H1 (cell line): ENCODE measurements at regions of chr3 and their contacts with region 1.

Region 1: DNA sequence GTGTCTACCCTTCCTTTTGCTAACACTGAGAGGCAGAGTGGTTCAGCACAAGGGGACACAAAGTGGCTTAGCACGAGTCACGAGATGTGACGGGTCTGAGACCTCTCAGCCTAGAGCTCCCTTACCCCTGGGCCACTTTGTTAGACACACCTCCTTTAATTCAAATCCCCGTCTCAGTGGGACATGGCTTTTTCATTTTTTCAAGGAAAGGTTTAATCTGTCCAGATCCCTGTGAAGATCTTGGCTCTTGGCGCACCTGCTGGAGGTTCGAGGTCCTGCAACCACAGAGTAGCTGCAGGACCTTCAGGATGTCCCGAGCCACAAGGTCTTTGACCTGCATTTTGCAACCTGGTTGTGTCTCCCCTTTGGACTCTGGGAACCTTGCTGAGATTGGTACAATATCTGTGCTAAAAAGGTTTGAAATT is 52.0 kb downstream of the LPP start:
- DNase-seq: no peak
- H3K4me3 ChIP-seq: no peak overlapping the region
- H3K27ac ChIP-seq: no peak overlapping the region
- H3K4me1 ChIP-seq: peaks cover 0 to 15% (median 4%) of the 10 kb centered on the region in 4 experiments; a peak in 5 of 7 replicates
- H3K27me3 ChIP-seq: no peaks in the 10 kb centered on the region
- CTCF ChIP-seq: peak; percentile 32 to 58 (median 57); a peak in 3 of 4 replicates
- EP300 ChIP-seq: no peak
- POLR2A ChIP-seq: no peak
- RAD21 ChIP-seq: peak; percentile 49 to 50

Region 2: DNA sequence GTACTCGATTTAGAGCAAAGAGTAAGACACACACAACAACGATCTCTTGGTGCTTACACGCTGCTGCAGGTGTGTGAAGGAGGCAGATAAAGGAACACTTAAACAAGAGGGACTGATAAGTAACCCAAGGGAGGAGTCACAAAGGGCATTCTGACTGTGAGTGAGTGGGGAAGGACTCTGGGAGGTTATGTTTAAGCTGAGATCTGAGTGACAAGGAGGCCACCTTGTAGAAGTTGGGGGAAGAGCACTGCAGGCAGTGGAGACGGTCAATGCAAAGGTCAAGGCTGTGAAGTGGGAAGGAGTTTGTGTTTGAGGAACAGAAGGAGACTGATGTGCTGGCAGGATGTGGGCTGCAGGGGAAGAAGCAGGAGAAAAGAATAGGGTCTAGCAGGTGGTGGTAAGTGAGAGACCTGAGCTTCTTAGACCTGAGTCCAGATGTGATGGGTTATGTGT is 11.0 kb after region 1 on chr3:
- CTCF ChIA-PET with region 1: interaction called, 18 read pairs
- POLR2A ChIA-PET with region 1: interaction called, 3 read pairs
- DNase-seq: no peak
- H3K4me3 ChIP-seq: no peak overlapping the region
- H3K27ac ChIP-seq: no peak overlapping the region
- H3K4me1 ChIP-seq: peaks cover 0 to 11% (median 5%) of the 10 kb centered on the region in 4 experiments; a peak in 4 of 7 replicates
- H3K27me3 ChIP-seq: no peaks in the 10 kb centered on the region
- CTCF ChIP-seq: no peak
- EP300 ChIP-seq: no peak
- POLR2A ChIP-seq: no peak
- RAD21 ChIP-seq: no peak

Region 3: DNA sequence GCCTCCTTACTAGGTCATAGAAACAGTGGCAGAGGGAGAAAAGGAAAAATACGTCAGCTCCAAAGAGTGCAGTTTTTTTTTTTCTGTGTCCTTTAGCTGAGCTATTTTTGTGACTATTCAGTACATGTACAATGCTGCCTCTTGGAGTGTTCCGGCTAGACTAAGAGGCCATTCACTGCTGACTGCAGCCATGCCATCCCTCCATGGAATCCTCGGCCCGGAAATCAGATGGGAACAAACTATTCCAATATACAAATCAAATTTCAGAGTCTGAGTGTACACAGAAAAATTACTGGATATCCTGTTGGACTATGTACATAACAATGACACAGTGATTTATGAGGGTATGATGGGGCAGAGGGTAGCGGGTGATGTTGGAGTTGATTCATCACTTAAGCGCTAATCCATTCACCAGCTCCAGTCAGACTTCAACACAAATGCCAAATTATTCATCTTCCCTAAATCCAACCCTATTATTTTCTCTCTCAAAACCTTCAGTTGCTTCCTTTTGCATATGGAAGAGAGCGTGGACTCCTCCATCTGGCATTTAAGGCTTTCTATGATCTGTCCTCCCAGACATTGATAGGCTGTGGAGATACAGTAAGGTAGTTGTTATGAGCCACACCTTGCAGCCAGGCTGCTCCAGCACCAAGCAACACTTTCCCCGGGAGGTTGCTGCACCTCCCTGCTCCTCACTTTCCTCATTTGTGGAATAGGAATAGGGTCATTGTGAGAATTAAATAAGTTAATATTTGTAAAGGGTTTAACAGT is 57.1 kb after region 1 on chr3:
- CTCF ChIA-PET with region 1: interaction called, 11 read pairs
- POLR2A ChIA-PET with region 1: interaction called, 3 read pairs
- DNase-seq: no peak
- H3K4me3 ChIP-seq: no peak overlapping the region
- H3K27ac ChIP-seq: no peak overlapping the region
- H3K4me1 ChIP-seq: peaks cover 4 to 9% (median 8%) of the 10 kb centered on the region in 4 experiments; a peak in 6 of 7 replicates
- H3K27me3 ChIP-seq: no peaks in the 10 kb centered on the region
- CTCF ChIP-seq: no peak
- EP300 ChIP-seq: no peak
- POLR2A ChIP-seq: no peak
- RAD21 ChIP-seq: no peak

Region 4: DNA sequence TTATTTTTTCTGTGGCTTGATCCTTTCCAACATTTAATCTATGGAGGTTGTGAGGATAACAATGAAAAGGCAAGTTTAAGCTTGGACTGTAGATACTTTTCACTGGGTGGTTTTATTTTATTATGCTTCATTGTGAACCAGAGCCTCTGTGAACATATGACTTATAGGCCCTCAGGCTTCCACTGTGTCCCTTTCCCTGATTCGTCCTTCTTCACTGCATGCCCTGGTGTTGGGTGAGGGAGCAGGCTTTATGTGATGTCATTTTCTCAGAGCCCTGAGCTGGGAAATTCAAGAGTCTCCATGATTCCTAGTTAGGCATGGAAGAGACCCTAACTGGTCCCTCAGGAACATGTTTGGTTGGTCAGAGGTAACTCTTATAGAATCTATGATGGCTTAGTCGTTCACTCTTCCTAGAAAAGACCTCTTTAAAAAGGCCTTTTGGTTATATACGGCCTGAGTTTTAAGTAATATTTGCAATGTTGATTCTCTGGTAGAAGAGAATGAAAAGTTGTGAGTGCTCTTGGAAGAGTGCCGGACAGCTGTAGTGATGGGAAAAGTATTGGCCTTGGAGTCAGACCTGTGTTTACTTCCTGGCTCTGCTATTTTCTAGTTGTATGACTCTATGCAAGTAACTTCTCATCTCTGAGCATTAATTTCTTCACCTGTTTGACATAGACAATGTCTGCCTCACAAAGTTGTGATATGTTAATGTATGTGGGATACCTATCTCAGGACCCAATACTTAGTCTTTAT is 116.3 kb after region 1 on chr3:
- CTCF ChIA-PET with region 1: no interaction called
- POLR2A ChIA-PET with region 1: no interaction called
- DNase-seq: no peak
- H3K4me3 ChIP-seq: no peak overlapping the region
- H3K27ac ChIP-seq: no peak overlapping the region
- H3K4me1 ChIP-seq: no peaks in the 10 kb centered on the region
- H3K27me3 ChIP-seq: no peaks in the 10 kb centered on the region
- CTCF ChIP-seq: no peak
- EP300 ChIP-seq: no peak
- POLR2A ChIP-seq: no peak
- RAD21 ChIP-seq: no peak